Dendritic cell treated with granulocyte-macrophage colony-stimulating factor and Interleukin-4, amounts not matched to agents 40 ng/mL and 50 ng/mL, for 4 days (primary cell): ENCODE measurements at regions of chr6 and their contacts with region 1.

Region 1: DNA sequence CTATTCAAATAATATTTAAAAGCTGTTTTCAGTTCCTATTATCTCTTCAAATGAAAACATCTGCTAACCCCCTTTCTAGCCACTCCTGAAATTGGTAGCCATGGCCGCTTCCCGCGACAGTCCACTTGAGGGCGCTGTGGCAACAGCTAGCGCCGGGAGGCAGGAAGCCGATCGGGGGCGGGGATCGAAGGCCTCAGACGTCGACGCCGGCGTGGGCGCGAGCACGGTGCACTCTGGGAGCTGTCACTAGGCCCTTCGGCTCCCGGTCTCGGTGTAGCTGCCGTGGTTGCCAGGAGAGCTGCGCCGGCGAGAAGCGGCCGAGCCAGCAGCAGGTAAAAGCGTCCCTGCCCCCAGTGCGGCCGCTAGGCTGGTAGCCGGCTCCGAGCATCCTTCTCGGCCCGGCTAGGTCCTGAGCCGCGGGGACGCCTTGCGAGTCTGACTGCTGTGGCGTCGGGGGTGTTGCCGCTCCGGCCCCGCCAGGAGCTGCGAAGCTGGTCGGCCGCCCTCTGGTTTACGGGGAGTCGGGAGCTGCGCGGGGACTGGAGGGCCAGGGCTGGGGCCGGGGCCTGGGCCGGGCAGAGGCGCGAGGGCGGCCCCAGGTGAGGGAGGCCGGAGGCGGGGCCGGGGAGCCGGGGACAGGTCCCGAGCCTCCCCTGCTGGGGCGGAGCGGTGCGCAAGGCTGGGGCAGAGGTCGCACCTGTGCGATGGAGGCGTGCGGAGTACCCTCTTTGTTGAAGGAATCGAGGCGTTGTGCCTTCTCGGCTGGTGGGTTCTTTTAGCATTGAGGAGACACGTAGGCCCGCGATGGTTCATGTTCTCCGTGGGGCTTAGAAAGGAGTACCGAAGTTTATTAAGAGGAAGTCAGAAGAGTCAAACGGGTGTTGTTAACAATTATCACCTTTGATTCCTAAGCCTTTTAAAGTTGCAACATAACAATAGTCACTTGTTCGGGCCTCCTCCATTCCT is at the start of gene DOP1A:
- H3K4me3 Mint-ChIP-seq: peak within 1 kb of the TSS; percentile 87
- H3K27ac Mint-ChIP-seq: peak within 1 kb of the TSS; percentile 89
- H3K4me1 Mint-ChIP-seq: peaks cover 32% of the 10 kb centered on the region
- H3K27me3 Mint-ChIP-seq: no peaks in the 10 kb centered on the region

Region 2: DNA sequence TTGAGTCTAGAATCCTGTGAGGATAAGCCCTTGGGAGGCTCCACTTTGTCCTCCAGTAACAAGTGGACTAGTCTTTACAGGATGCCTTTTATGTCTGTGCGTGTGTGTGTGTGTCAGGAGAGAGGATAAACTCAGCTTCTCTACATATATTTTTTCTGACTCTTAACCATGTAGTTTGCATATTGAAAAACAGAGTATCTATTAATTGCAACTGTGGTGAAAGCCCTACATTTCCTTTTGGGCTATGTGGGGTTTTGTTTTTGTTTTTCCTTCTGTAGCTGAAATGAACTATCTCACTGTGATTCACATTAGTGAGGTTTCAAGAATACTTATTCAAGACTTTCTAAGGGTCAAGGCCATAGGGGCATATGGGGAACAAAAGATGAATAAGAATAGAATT is 686.5 kb before region 1 on chr6:
- intact Hi-C with region 1: no loop called
- H3K4me3 Mint-ChIP-seq: no peak overlapping the region
- H3K27ac Mint-ChIP-seq: no peak overlapping the region
- H3K4me1 Mint-ChIP-seq: no peaks in the 10 kb centered on the region
- H3K27me3 Mint-ChIP-seq: no peaks in the 10 kb centered on the region

Region 3: GRCh38 chr6:83019741-83020140 is 48.0 kb before region 1 on chr6:
- intact Hi-C with region 1: no loop called
- H3K4me3 Mint-ChIP-seq: no peak overlapping the region
- H3K27ac Mint-ChIP-seq: no peak overlapping the region
- H3K4me1 Mint-ChIP-seq: no peaks in the 10 kb centered on the region
- H3K27me3 Mint-ChIP-seq: no peaks in the 10 kb centered on the region

Region 4: GRCh38 chr6:83086751-83087150 is 19.0 kb after region 1 on chr6:
- intact Hi-C with region 1: no loop called
- H3K4me3 Mint-ChIP-seq: no peak overlapping the region
- H3K27ac Mint-ChIP-seq: no peak overlapping the region
- H3K4me1 Mint-ChIP-seq: no peaks in the 10 kb centered on the region
- H3K27me3 Mint-ChIP-seq: no peaks in the 10 kb centered on the region

Region 5: GRCh38 chr6:83114164-83114563 is 46.4 kb after region 1 on chr6:
- intact Hi-C with region 1: loop called (anchors 5 kb)
- H3K4me3 Mint-ChIP-seq: no peak overlapping the region
- H3K27ac Mint-ChIP-seq: no peak overlapping the region
- H3K4me1 Mint-ChIP-seq: no peaks in the 10 kb centered on the region
- H3K27me3 Mint-ChIP-seq: no peaks in the 10 kb centered on the region

Region 6: DNA sequence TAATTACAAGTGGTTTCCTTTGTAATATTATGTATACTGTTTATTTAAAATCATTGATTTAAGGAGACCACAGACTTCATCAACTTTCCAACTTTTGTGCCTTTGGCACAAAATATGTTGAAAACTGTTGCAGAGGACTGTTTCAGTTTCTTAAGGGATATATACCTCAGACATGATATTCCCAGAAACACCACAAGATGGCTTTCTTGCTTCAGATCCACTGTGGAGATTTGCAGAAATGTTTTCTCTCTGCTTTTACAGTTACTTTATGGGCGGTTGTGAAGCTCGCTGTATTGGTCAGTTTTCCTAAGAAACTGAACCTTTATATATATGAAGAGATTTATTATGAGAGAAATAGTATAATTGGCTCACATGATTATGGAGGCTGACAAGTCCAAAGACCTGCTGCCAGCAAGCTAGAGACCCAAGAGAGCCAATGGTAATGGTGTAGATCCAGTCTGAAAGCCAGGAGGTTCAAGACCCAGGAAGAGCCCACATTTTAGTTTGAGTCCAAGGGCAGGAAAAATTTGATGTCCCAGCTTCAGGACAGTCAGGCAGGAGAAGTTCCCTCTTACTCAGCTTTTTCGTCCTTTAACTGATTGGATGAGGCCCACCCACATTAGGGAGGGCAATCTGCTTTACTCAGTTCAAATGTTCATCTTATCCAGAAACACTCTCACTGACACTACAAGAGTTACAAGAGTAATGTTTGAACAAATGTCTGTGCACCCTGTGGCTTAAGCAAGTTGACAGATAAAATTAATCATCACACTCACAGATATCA is 350.3 kb after region 1 on chr6:
- intact Hi-C with region 1: loop called (anchors 5 kb)
- H3K4me3 Mint-ChIP-seq: no peak overlapping the region
- H3K27ac Mint-ChIP-seq: no peak overlapping the region
- H3K4me1 Mint-ChIP-seq: peaks cover 22% of the 10 kb centered on the region
- H3K27me3 Mint-ChIP-seq: peaks cover 2% of the 10 kb centered on the region

Region 7: DNA sequence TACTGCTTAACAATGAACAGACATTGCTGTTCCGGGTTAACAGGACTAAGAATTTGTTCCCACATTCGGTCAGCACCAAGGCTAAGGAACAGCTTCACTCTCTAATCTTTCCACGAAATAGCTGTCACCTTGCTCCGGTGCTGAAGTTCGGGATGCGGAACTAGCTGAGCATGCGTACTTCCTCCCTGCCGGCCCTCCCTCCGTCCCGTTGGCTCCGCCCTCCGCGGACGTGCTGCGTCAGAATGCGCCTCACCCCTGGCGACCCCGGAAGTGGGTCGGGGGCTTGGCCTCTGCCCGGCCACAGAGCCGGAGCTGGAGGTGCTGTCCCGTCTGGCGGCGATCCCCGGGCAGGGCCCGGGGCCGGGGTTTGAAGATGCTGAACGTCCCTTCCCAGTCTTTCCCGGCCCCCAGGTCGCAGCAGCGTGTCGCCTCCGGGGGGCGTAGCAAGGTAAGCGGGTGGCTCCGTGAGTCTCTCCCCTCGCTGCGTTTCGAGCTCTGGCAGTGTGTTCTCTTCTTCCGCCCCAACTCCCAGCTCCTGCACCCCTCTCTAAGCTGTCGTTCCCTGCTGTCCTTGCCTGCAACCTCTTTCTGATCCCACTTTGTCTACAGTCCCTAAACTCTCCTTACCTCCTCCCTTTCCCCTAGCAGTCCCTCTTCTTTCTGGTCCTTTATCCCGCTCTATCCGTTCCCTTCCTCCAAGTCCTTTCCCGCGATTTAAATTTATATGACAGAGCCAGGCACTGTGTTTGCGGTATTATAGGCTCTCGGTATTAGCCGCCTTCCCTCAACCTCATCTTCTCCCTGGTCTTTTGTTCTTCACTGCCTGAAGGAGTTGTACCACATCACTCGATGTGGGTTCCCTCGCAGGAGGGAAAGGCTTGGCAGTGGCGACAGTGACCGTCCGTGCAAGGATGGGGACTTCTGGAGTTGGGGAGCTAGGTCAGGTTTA is 792.0 kb after region 1 on chr6 and contains the start of gene CYB5R4:
- intact Hi-C with region 1: loop called (anchors 10 kb)
- H3K4me3 Mint-ChIP-seq: peak within 1 kb of the TSS; percentile 99
- H3K27ac Mint-ChIP-seq: peak within 1 kb of the TSS; percentile 96
- H3K4me1 Mint-ChIP-seq: peaks cover 31% of the 10 kb centered on the region
- H3K27me3 Mint-ChIP-seq: peaks cover 13% of the 10 kb centered on the region